Head of caudate nucleus (tissue), 42 donors: ENCODE measurements at regions of chr20 and their contacts with region 1.

Region 1: DNA sequence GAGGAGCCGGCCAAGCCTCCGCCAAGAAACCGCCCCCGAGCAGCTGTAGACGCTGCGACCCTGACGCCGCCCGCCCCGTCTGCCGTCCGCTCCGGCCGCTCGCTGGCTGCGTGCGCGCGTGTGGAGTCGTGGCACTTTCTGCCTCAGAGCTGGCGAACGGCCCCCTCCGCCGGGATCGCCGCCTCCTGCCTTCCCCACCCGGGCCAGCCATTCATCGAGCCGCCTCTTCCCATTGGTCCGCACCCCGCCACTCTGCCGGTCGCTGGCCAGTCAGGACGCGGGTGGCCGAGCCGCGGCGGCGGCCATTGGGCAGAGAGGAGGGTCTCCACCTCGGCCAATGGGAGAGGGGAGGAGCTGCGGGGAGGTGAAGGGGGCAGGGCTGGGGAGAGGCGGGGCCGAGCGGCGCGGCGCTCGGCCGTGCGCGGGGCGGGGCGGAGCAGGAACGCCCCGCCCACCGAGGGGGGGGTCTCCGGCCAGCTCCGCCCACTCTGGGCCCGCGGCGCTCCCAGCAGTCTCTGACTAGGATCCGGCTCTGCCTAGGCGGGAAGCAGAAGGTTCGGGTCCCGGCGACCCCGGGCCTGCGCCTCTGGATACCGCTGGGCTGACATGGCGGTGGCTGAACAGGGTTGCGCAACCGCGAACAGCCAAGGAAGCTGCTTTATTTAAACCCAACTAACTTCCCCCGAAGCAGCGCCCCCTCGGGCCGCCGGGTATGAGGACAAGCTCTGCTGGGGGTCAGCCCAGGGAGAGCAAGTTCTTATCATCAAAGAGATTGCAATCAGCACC is at the start of gene RRBP1:
- DNase-seq: peak; percentile 97 to 100 (median 99)

Region 2: DNA sequence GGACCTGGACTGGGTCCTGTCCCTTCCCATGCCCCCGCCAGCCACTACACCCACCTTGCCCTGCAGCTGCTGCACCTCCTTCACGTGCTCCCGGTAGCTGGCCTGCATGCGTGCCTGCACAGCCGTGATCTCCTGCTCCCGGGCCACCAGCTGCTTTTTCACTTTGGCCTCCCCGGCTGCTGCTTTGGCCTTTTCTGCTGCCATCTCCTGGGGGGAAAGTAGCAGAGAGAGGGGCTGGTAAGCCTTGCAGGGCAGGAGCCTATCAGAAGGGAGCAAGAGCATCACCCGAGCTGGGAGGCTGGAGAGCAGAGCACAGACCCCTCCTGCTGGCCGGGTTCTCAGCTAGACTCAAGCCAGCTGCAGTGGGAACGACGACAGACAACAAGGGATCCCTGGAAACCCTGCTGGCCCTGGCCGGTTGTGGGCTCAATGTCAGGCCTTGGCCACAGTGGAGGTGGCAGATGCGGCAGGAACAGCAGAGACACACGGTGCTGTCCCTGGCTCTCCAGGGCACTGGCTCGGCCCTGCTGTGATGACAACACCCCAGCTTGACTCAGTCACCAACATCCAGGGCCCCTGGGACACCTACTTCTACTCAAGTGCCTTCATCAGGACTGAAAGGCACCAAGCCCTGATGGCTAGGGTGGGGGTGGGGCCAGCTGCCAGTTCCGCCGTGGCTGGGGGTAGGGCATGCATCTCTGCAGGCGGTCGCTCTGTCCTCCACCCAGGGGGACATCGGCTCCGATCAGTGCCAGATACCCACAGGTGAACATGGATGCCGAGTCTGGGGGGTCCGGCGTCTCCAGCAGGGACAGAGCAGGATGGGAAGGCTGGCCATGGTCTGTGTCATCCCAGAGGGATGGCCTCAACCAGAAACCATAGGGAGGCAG is 45.5 kb before region 1 on chr20:
- intact Hi-C with region 1: loop called (anchors 5 kb)
- DNase-seq: peak; percentile 60 to 93 (median 86)

Region 3: GRCh38 chr20:17759241-17759848 is 77.0 kb after region 1 on chr20:
- intact Hi-C with region 1: no loop called
- DNase-seq: no peak

Region 4: DNA sequence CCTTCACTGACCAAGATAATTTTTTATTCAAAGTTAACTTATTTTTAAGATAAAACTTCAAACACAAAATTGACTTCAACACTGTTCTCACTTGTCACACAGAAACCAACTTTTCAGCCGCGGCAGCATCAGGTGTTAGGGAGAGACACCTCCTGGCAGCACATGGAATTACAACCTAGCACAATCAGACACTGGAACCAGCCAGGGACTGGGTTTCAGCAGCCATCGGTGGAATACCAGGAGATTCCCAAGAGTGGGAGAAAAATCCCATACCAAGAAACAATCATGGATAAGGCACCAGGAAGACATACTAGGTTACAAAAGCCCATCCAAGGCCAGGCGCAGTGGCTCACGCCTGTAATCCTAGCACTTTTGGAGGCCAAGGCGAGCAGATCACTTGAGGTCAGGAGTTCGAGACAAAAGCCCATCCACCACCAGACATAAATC is 216.3 kb after region 1 on chr20:
- intact Hi-C with region 1: loop called (anchors 10 kb)
- DNase-seq: peak; percentile 38 to 90 (median 75)

Region 5: GRCh38 chr20:17968366-17969279 is 286.3 kb after region 1 on chr20 and contains the starts of genes MGME1 and SNX5:
- intact Hi-C with region 1: loop called (anchors 10 kb)
- DNase-seq: peak; percentile 97 to 100 (median 99)

Region 6: DNA sequence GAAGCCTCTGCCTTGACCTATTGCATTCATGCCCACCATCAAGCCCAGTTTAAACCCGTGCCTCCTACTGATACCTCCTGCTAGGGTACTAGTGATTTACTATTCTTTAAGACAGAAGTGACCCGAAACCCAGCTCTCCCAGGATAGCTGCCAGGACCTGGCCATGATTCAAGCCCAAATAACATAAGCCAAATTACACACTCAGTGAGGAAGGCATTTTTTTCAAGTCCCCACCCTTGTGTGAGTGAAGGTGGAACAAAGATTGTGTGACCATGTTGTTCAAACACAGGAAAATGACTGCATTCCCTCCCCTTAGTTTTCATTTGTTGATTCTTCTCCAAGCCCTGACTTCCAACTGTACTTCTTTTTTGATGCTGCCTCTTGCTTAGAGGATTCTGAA is 451.7 kb after region 1 on chr20:
- intact Hi-C with region 1: no loop called
- DNase-seq: no peak